B cell (primary cell): ENCODE measurements at regions of chr10 and their contacts with region 1.

Region 1: GRCh38 chr10:127853868-127854768 is 38.6 kb downstream of the CLRN3 start:
- DNase-seq: peak; percentile 76
- ATAC-seq: peak; percentile 64
- H3K4me3 ChIP-seq: peak overlapping the region in 1 of 5 experiments; percentile 11
- H3K4me3 Mint-ChIP-seq: peak overlapping the region; percentile 77
- H3K27ac ChIP-seq: peak overlapping the region in 1 of 2 donors; percentile 22
- H3K27ac Mint-ChIP-seq: peak overlapping the region; percentile 66
- H3K4me1 ChIP-seq: peaks cover 27 to 32% of the 10 kb centered on the region in 2 donors
- H3K4me1 Mint-ChIP-seq: peaks cover 37% of the 10 kb centered on the region
- H3K27me3 ChIP-seq: no peaks in the 10 kb centered on the region
- H3K27me3 Mint-ChIP-seq: no peaks in the 10 kb centered on the region
- CTCF ChIP-seq: peak; percentile 78

Region 2: GRCh38 chr10:125976960-125977603 is 1877.0 kb before region 1 on chr10:
- CTCF ChIA-PET with region 1: interaction called, 18 read pairs
- POLR2A ChIA-PET with region 1: no interaction called
- intact Hi-C with region 1: no loop called
- DNase-seq: no peak
- ATAC-seq: no peak
- H3K4me3 ChIP-seq: no peak overlapping the region
- H3K4me3 Mint-ChIP-seq: no peak overlapping the region
- H3K27ac ChIP-seq: no peak overlapping the region
- H3K27ac Mint-ChIP-seq: no peak overlapping the region
- H3K4me1 ChIP-seq: no peaks in the 10 kb centered on the region
- H3K4me1 Mint-ChIP-seq: peaks cover under 1% of the 10 kb centered on the region
- H3K27me3 ChIP-seq: peaks cover 0 to 2% (median 0%) of the 10 kb centered on the region in 4 experiments
- H3K27me3 Mint-ChIP-seq: peaks cover 26% of the 10 kb centered on the region
- CTCF ChIP-seq: no peak

Region 3: GRCh38 chr10:127563718-127564553 is 290.2 kb before region 1 on chr10:
- CTCF ChIA-PET with region 1: interaction called, 4 read pairs
- POLR2A ChIA-PET with region 1: no interaction called
- intact Hi-C with region 1: loop called (anchors 5 kb)
- DNase-seq: peak; percentile 11
- ATAC-seq: no peak
- H3K4me3 ChIP-seq: no peak overlapping the region
- H3K4me3 Mint-ChIP-seq: no peak overlapping the region
- H3K27ac ChIP-seq: no peak overlapping the region
- H3K27ac Mint-ChIP-seq: no peak overlapping the region
- H3K4me1 ChIP-seq: no peaks in the 10 kb centered on the region
- H3K4me1 Mint-ChIP-seq: no peaks in the 10 kb centered on the region
- H3K27me3 ChIP-seq: no peaks in the 10 kb centered on the region
- H3K27me3 Mint-ChIP-seq: no peaks in the 10 kb centered on the region
- CTCF ChIP-seq: peak; percentile 52

Region 4: GRCh38 chr10:127755753-127756152 is 98.4 kb before region 1 on chr10:
- CTCF ChIA-PET with region 1: interaction called, 13 read pairs
- POLR2A ChIA-PET with region 1: no interaction called
- intact Hi-C with region 1: no loop called
- DNase-seq: no peak
- ATAC-seq: no peak
- H3K4me3 ChIP-seq: no peak overlapping the region
- H3K4me3 Mint-ChIP-seq: no peak overlapping the region
- H3K27ac ChIP-seq: no peak overlapping the region
- H3K27ac Mint-ChIP-seq: no peak overlapping the region
- H3K4me1 ChIP-seq: no peaks in the 10 kb centered on the region
- H3K4me1 Mint-ChIP-seq: no peaks in the 10 kb centered on the region
- H3K27me3 ChIP-seq: peaks cover 0 to under 1% (median 0%) of the 10 kb centered on the region in 4 experiments
- H3K27me3 Mint-ChIP-seq: peaks cover 7% of the 10 kb centered on the region
- CTCF ChIP-seq: no peak

Region 5: DNA sequence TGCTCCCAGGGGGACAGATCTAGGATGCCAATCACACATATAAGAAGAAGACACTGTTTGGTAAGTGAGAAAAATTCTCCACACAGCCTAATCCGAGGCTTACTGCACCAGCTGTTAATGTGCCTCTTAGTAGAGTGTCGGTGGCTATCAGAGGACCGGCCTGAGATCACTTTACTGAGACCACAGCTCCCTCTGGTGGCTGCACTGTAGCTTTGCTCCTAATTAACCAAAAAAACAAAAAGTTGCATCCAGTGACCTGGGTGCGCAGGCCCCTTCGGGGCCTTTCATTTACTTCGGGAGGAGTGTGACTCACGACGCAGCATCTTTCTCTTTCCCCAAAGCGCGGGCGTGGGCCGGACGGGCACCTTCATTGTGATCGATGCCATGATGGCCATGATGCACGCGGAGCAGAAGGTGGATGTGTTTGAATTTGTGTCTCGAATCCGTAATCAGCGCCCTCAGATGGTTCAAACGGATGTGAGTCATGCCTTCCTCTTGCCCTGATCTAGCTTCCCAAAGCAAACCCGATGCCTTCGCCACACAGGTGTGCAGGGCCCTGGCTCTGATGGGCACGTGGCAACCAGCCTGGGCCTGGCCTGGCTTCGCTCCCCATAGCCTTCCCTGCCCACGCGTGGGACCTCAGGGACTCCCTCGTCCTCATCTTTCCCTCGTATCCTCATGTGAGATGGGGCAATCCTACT is 215.4 kb after region 1 on chr10:
- CTCF ChIA-PET with region 1: interaction called, 8 read pairs
- POLR2A ChIA-PET with region 1: no interaction called
- intact Hi-C with region 1: loop called (anchors 1 kb)
- DNase-seq: peak; percentile 88
- ATAC-seq: no peak
- H3K4me3 ChIP-seq: no peak overlapping the region
- H3K4me3 Mint-ChIP-seq: no peak overlapping the region
- H3K27ac ChIP-seq: no peak overlapping the region
- H3K27ac Mint-ChIP-seq: peak overlapping the region; percentile 34
- H3K4me1 ChIP-seq: peaks cover 19 to 33% of the 10 kb centered on the region in 2 donors
- H3K4me1 Mint-ChIP-seq: peaks cover 33% of the 10 kb centered on the region
- H3K27me3 ChIP-seq: no peaks in the 10 kb centered on the region
- H3K27me3 Mint-ChIP-seq: no peaks in the 10 kb centered on the region
- CTCF ChIP-seq: peak; percentile 91